GM12878 (cell line): ENCODE measurements at regions of chr5 and their contacts with region 1.

Region 1: GRCh38 chr5:89303033-89303480 is 420.1 kb upstream of the MEF2C start:
- DNase-seq: peak; percentile 84
- ATAC-seq: peak; percentile 75
- H3K4me3 ChIP-seq: peak overlapping the region; percentile 16; the same call in 1 of the 2 replicates
- H3K27ac ChIP-seq: peak overlapping the region; percentile 78
- H3K4me1 ChIP-seq: peaks cover 37% of the 10 kb centered on the region
- H3K27me3 ChIP-seq: no peaks in the 10 kb centered on the region
- CTCF ChIP-seq: no peak
- EP300 ChIP-seq: peak in 1 of 2 experiments; percentile 40; a peak in 1 of 4 replicates
- POLR2A ChIP-seq: no peak
- RAD21 ChIP-seq: no peak; the same call in 1 of the 2 replicates

Region 2: DNA sequence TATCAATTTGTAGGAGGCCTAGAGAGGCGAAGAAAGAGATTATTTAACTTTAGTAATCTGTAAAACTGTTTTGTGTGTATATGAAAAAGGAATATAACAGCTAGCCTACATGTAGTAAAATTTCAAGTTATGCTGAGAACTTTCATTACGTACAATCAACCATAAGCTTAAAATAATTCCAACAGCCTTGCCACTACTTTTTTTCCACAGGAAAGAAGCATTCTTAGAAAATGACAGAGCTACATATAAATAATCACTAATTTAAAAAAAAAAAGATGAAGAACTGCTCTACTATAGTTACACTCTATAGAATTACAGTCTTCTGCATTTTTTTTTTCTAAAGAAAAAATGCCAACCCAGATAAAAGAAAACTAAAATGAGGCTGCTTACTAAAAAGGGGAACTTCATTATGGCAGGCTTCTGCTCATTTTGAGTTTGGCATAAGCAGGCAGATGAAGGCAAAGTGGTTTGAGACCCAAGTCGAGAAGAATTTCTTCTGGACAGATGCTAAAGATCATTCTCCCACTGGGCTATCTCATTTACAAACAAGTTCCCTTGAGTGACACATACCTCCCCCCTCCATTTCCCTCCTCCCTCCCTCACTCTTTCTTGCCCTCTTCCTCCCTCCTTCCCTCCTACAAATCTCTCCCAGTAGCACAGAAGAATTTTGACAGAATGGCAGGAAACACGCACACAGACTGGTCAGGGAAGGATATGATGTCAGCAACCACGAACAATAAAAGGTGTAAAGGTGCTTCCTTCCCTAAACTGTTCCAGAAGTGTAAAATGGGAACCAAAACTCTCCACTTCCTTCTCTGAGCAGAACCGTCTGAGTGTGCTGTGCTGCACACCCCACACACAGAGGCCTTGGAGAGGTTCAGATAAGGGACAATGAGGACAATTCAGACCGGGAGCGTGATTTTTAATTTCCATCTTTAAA is 476.1 kb before region 1 on chr5:
- CTCF ChIA-PET with region 1: no interaction called
- POLR2A ChIA-PET with region 1: no interaction called
- RAD21 ChIA-PET with region 1: no interaction called
- SMC1A ChIA-PET with region 1: interaction called, 3 read pairs
- in situ Hi-C with region 1: no loop called
- intact Hi-C with region 1: loop called (anchors 5 kb)
- DNase-seq: peak; percentile 98
- ATAC-seq: peak; percentile 63
- H3K4me3 ChIP-seq: peak overlapping the region; percentile 64; the same call in 1 of the 2 replicates
- H3K27ac ChIP-seq: peak overlapping the region; percentile 80
- H3K4me1 ChIP-seq: peaks cover 23% of the 10 kb centered on the region
- H3K27me3 ChIP-seq: no peaks in the 10 kb centered on the region
- CTCF ChIP-seq: no peak
- EP300 ChIP-seq: peak; percentile 95 to 96
- POLR2A ChIP-seq: peak; percentile 52; the same call in 1 of the 2 replicates
- RAD21 ChIP-seq: no peak

Region 3: GRCh38 chr5:89071101-89071940 is 231.7 kb before region 1 on chr5:
- CTCF ChIA-PET with region 1: no interaction called
- POLR2A ChIA-PET with region 1: no interaction called
- RAD21 ChIA-PET with region 1: interaction called, 3 read pairs
- SMC1A ChIA-PET with region 1: interaction called, 5 read pairs
- in situ Hi-C with region 1: no loop called
- intact Hi-C with region 1: loop called (anchors 5 kb)
- DNase-seq: peak; percentile 33
- ATAC-seq: peak; percentile 92
- H3K4me3 ChIP-seq: peak overlapping the region; percentile 58
- H3K27ac ChIP-seq: peak overlapping the region; percentile 92
- H3K4me1 ChIP-seq: peaks cover 14% of the 10 kb centered on the region
- H3K27me3 ChIP-seq: no peaks in the 10 kb centered on the region
- CTCF ChIP-seq: no peak
- EP300 ChIP-seq: peak; percentile 52 to 66; a peak in 2 of 4 replicates
- POLR2A ChIP-seq: no peak
- RAD21 ChIP-seq: 0 out of 2 replicates have a peak, but pooled peaks have one; percentile 2

Region 4: GRCh38 chr5:89200899-89201298 is 102.2 kb before region 1 on chr5:
- CTCF ChIA-PET with region 1: no interaction called
- POLR2A ChIA-PET with region 1: no interaction called
- RAD21 ChIA-PET with region 1: no interaction called
- SMC1A ChIA-PET with region 1: no interaction called
- in situ Hi-C with region 1: no loop called
- intact Hi-C with region 1: no loop called
- DNase-seq: no peak
- ATAC-seq: no peak
- H3K4me3 ChIP-seq: no peak overlapping the region
- H3K27ac ChIP-seq: no peak overlapping the region
- H3K4me1 ChIP-seq: no peaks in the 10 kb centered on the region
- H3K27me3 ChIP-seq: no peaks in the 10 kb centered on the region
- CTCF ChIP-seq: no peak
- EP300 ChIP-seq: no peak
- POLR2A ChIP-seq: no peak
- RAD21 ChIP-seq: no peak

Region 5: GRCh38 chr5:89268460-89268859 is 34.6 kb before region 1 on chr5:
- CTCF ChIA-PET with region 1: interaction called, 16 read pairs
- POLR2A ChIA-PET with region 1: interaction called, 12 read pairs
- RAD21 ChIA-PET with region 1: interaction called, 40 read pairs
- SMC1A ChIA-PET with region 1: interaction called, 54 read pairs
- in situ Hi-C with region 1: no loop called
- intact Hi-C with region 1: no loop called
- DNase-seq: peak; percentile 51
- ATAC-seq: peak; percentile 38
- H3K4me3 ChIP-seq: no peak overlapping the region
- H3K27ac ChIP-seq: peak overlapping the region; percentile 43; the same call in 1 of the 2 replicates
- H3K4me1 ChIP-seq: peaks cover 46% of the 10 kb centered on the region
- H3K27me3 ChIP-seq: no peaks in the 10 kb centered on the region
- CTCF ChIP-seq: no peak
- EP300 ChIP-seq: no peak
- POLR2A ChIP-seq: no peak
- RAD21 ChIP-seq: 0 out of 2 replicates have a peak, but pooled peaks have one; percentile 12

Region 6: DNA sequence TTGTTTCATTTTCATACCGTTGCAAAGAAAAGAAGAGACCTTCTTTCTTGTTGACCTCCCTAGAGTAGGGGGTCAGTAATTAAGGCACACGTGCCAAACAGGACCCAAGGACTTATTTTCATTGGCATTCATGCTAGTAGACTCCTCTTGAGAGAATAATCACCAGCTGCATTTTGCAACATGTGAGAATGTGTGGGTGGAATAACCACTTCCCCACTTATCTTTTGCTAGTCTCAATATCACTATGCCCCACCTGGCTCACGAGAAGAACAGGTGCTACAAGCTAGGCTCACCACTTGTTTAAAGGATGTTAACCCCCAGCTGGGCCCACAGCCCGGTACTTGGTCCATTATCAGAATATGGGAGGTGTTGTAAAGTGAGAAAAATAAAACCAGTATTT is 40.6 kb after region 1 on chr5:
- CTCF ChIA-PET with region 1: interaction called, 19 read pairs
- POLR2A ChIA-PET with region 1: interaction called, 7 read pairs
- RAD21 ChIA-PET with region 1: interaction called, 57 read pairs
- SMC1A ChIA-PET with region 1: interaction called, 78 read pairs
- in situ Hi-C with region 1: no loop called
- intact Hi-C with region 1: loop called (anchors 5 kb)
- DNase-seq: peak; percentile 97
- ATAC-seq: peak; percentile 86
- H3K4me3 ChIP-seq: no peak overlapping the region
- H3K27ac ChIP-seq: peak overlapping the region; percentile 93
- H3K4me1 ChIP-seq: peaks cover 37% of the 10 kb centered on the region; the same call in 1 of the 2 replicates
- H3K27me3 ChIP-seq: no peaks in the 10 kb centered on the region
- CTCF ChIP-seq: no peak
- EP300 ChIP-seq: peak; percentile 100
- POLR2A ChIP-seq: no peak
- RAD21 ChIP-seq: peak; percentile 17

Region 7: GRCh38 chr5:89729623-89730301 is 426.7 kb after region 1 on chr5:
- CTCF ChIA-PET with region 1: interaction called, 5 read pairs
- POLR2A ChIA-PET with region 1: no interaction called
- RAD21 ChIA-PET with region 1: interaction called, 16 read pairs
- SMC1A ChIA-PET with region 1: interaction called, 7 read pairs
- in situ Hi-C with region 1: no loop called
- intact Hi-C with region 1: no loop called
- DNase-seq: peak; percentile 34
- ATAC-seq: peak; percentile 76
- H3K4me3 ChIP-seq: no peak overlapping the region
- H3K27ac ChIP-seq: no peak overlapping the region
- H3K4me1 ChIP-seq: peaks cover 7% of the 10 kb centered on the region; the same call in 1 of the 2 replicates
- H3K27me3 ChIP-seq: no peaks in the 10 kb centered on the region
- CTCF ChIP-seq: peak; percentile 26 to 54 (median 27); a peak in 4 of 6 replicates
- EP300 ChIP-seq: no peak
- POLR2A ChIP-seq: no peak
- RAD21 ChIP-seq: peak; percentile 65